Activated naive CD4-positive, alpha-beta T cell treated with anti-CD3 and anti-CD28 coated beads for 36 hours (primary cell): ENCODE measurements at regions of chr18 and their contacts with region 1.

Region 1: GRCh38 chr18:2994603-2995432 is 18.1 kb downstream of the LPIN2 start:
- DNase-seq: peak; percentile 85
- H3K4me3 Mint-ChIP-seq: no peak overlapping the region
- H3K27ac Mint-ChIP-seq: peak overlapping the region; percentile 78
- H3K4me1 Mint-ChIP-seq: peaks cover 91% of the 10 kb centered on the region
- H3K27me3 Mint-ChIP-seq: no peaks in the 10 kb centered on the region

Region 2: GRCh38 chr18:2932247-2933181 is 62.3 kb before region 1 on chr18:
- CTCF ChIA-PET with region 1: interaction called, 101 read pairs
- intact Hi-C with region 1: no loop called
- DNase-seq: peak; percentile 68
- H3K4me3 Mint-ChIP-seq: no peak overlapping the region
- H3K27ac Mint-ChIP-seq: peak overlapping the region; percentile 94
- H3K4me1 Mint-ChIP-seq: peaks cover 35% of the 10 kb centered on the region
- H3K27me3 Mint-ChIP-seq: no peaks in the 10 kb centered on the region

Region 3: GRCh38 chr18:2978646-2979045 is 16.2 kb before region 1 on chr18:
- CTCF ChIA-PET with region 1: interaction called, 19 read pairs
- intact Hi-C with region 1: loop called (anchors 1 kb)
- DNase-seq: peak; percentile 66
- H3K4me3 Mint-ChIP-seq: peak overlapping the region; percentile 54
- H3K27ac Mint-ChIP-seq: peak overlapping the region; percentile 92
- H3K4me1 Mint-ChIP-seq: peaks cover 91% of the 10 kb centered on the region
- H3K27me3 Mint-ChIP-seq: no peaks in the 10 kb centered on the region

Region 4: DNA sequence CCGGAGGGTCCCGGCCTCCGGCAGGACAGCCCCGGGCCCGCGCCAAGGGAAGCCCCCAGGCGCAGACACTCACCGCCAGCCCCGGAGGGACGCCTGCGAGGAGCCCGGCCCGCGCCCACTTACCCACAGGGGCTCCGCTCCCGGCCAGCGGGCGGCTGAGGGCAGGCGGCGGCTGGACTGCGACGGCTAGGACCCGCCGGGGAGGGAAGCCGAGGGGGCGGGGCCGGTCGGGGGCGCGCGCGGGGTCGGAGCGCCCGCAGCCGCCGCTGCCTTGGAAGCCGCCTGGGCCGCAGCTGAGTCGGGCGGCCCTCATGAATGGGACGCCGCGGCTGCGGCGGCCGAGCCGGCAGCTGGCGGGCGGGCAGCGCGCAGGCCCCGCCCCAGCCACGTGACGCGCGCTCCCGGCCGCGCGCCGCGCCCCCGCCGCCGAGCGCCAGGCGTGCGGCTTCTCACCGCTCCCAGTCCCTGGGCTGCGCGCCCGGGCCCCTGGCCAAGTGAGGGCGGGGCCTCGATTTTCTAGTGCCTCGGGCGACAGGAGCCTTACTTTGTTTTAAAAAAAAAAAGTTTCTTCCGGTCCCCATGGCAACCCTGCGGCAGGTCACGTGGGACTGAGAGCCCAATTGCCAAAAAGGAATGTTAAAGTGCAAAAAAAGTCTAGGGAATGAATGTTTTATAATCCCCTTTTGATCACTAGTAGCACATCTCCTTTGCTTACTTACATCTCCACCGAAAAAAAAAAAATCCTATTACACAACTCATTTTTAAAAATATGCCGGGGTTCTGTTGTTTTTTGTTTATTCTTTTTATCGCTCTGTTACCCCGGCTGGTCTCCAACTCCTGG is 18.4 kb after region 1 on chr18 and contains the start of gene LPIN2:
- CTCF ChIA-PET with region 1: interaction called, 6 read pairs
- intact Hi-C with region 1: loop called (anchors 1 kb)
- DNase-seq: peak; percentile 97
- H3K4me3 Mint-ChIP-seq: peak within 1 kb of the TSS; percentile 84
- H3K27ac Mint-ChIP-seq: peak within 1 kb of the TSS; percentile 92
- H3K4me1 Mint-ChIP-seq: peaks cover 68% of the 10 kb centered on the region
- H3K27me3 Mint-ChIP-seq: no peaks in the 10 kb centered on the region
- total RNA-seq, gene LPIN2: 62.4 to 65.7 TPM

Region 5: DNA sequence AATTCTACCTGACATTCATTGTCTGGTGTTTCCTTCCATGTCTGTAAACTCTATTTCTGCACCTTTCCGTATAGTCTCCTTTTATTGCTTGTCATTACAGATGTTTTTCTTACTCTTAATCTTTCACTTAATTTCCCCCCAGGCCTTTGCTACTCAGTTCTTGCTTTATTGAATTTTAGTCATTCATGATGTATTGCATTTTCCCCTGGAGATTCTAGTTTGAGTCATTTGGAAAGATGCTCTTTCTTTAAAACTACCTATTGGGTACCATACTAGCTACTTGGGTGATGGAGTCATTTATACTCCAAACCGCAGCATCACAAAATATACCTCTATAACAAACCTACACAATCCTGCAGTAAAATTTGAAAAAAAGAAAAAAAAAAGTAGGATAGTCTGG is 45.4 kb after region 1 on chr18:
- CTCF ChIA-PET with region 1: no interaction called
- intact Hi-C with region 1: loop called (anchors 1 kb)
- DNase-seq: no peak
- H3K4me3 Mint-ChIP-seq: no peak overlapping the region
- H3K27ac Mint-ChIP-seq: no peak overlapping the region
- H3K4me1 Mint-ChIP-seq: peaks cover 23% of the 10 kb centered on the region
- H3K27me3 Mint-ChIP-seq: no peaks in the 10 kb centered on the region

Region 6: DNA sequence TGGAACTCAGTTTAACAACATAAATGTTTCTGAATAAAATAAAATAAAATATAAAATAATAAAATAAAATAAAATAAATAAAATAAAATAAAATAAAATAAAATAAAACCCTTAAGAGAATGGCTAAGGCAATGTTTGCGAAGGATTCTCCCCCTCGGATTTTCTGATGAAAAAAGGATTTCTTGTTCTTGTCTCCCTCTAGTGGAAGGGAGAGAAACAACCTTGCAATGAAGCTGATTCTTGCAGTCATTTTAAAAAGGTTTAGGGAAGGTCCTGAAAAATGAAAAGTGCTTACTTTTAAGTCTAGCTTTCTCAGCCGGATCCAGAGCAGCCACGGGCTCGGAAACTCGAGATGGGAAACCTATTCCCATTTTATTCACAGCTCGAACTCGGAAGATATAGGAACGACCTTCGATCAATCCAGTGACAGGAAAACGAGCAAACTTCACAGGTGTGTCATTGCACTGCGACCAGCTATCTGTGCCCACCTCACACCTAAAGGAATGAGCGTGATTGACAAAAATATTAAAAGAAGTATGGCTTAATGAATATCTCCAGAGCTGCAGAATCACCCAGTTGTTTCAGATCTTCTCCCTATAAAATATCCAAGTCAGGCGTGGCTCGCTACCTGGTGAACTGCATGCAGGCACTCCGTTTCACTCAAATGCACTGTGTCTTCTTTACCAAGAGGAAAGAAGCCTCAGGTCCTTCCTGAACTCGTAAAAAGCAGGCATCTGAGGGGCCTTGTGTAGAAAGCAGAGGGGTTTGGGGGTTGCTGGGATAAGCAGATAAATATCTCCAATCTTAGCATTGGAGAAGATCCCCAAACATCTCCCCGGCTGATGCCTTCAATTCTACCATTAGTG is 156.8 kb after region 1 on chr18:
- CTCF ChIA-PET with region 1: interaction called, 13 read pairs
- intact Hi-C with region 1: loop called (anchors 1 kb)
- DNase-seq: no peak
- H3K4me3 Mint-ChIP-seq: no peak overlapping the region
- H3K27ac Mint-ChIP-seq: no peak overlapping the region
- H3K4me1 Mint-ChIP-seq: peaks cover 6% of the 10 kb centered on the region
- H3K27me3 Mint-ChIP-seq: no peaks in the 10 kb centered on the region

Region 7: DNA sequence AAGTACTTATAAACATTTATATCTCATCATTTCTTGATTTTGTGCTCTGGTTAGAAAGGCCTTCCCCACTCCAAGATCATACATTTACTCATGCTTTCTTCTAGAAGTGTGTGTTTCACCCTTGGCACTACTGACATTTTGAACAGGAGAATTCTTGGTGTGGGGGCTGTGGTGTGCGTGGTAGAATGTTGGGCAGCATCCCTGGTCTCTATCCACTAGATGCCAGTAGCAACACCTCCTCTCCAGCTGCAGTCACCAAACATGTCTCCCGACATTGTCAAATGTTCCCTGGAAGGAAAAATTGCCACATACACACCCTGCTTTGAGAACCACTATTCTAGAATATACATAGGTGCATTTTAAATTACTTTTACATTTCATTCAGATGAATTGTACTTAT is 446.5 kb after region 1 on chr18:
- CTCF ChIA-PET with region 1: no interaction called
- intact Hi-C with region 1: no loop called
- DNase-seq: peak; percentile 46
- H3K4me3 Mint-ChIP-seq: no peak overlapping the region
- H3K27ac Mint-ChIP-seq: no peak overlapping the region
- H3K4me1 Mint-ChIP-seq: peaks cover 3% of the 10 kb centered on the region
- H3K27me3 Mint-ChIP-seq: no peaks in the 10 kb centered on the region